Sciatic nerve (tissue), 2 donors: ENCODE measurements at regions of chr1 and their contacts with region 1.

Region 1: GRCh38 chr1:77134359-77134758 is 84.9 kb downstream of the PIGK start:
- DNase-seq: no peak
- ATAC-seq: no peak

Region 2: GRCh38 chr1:76330991-76331603 is 803.3 kb before region 1 on chr1:
- intact Hi-C with region 1: loop called (anchors 10 kb)
- DNase-seq: no peak
- ATAC-seq: peak; percentile 66

Region 3: GRCh38 chr1:77218477-77219165 is 84.3 kb after region 1 on chr1:
- intact Hi-C with region 1: no loop called
- DNase-seq: no peak
- ATAC-seq: peak; percentile 67